CD4-positive, alpha-beta memory T cell (primary cell): ENCODE measurements at regions of chrX and their contacts with region 1.

Region 1: GRCh38 chrX:63720293-63720692 is 64.7 kb downstream of the ARHGEF9 start:
- DNase-seq: no peak
- H3K4me3 ChIP-seq: no peak overlapping the region
- H3K4me3 Mint-ChIP-seq: no peak overlapping the region
- H3K27ac ChIP-seq: no peak overlapping the region
- H3K27ac Mint-ChIP-seq: no peak overlapping the region
- H3K4me1 ChIP-seq: no peaks in the 10 kb centered on the region
- H3K4me1 Mint-ChIP-seq: peaks cover 0 to 2% (median under 1%) of the 10 kb centered on the region in 4 donors
- H3K27me3 ChIP-seq: no peaks in the 10 kb centered on the region
- H3K27me3 Mint-ChIP-seq: no peaks in the 10 kb centered on the region

Region 2: GRCh38 chrX:63686878-63687714 is 33.2 kb before region 1 on chrX:
- CTCF ChIA-PET with region 1: no interaction called
- POLR2A ChIA-PET with region 1: no interaction called
- intact Hi-C with region 1: no loop called
- DNase-seq: peak in 4 of 5 donors; percentile 14 to 37 (median 26)
- H3K4me3 ChIP-seq: no peak overlapping the region
- H3K4me3 Mint-ChIP-seq: no peak overlapping the region
- H3K27ac ChIP-seq: no peak overlapping the region
- H3K27ac Mint-ChIP-seq: peak overlapping the region in 2 of 7 donors; percentile 23 to 49
- H3K4me1 ChIP-seq: no peaks in the 10 kb centered on the region
- H3K4me1 Mint-ChIP-seq: peaks cover 0 to 5% (median 2%) of the 10 kb centered on the region in 4 donors
- H3K27me3 ChIP-seq: no peaks in the 10 kb centered on the region
- H3K27me3 Mint-ChIP-seq: no peaks in the 10 kb centered on the region

Region 3: GRCh38 chrX:63761639-63762038 is 41.3 kb after region 1 on chrX:
- CTCF ChIA-PET with region 1: no interaction called
- POLR2A ChIA-PET with region 1: no interaction called
- intact Hi-C with region 1: loop called (anchors 5 kb)
- DNase-seq: peak in 3 of 5 donors; percentile 10 to 17 (median 16)
- H3K4me3 ChIP-seq: no peak overlapping the region
- H3K4me3 Mint-ChIP-seq: no peak overlapping the region
- H3K27ac ChIP-seq: no peak overlapping the region
- H3K27ac Mint-ChIP-seq: peak overlapping the region in 1 of 7 donors; percentile 53
- H3K4me1 ChIP-seq: no peaks in the 10 kb centered on the region
- H3K4me1 Mint-ChIP-seq: no peaks in the 10 kb centered on the region
- H3K27me3 ChIP-seq: no peaks in the 10 kb centered on the region
- H3K27me3 Mint-ChIP-seq: peaks cover 0 to 1% of the 10 kb centered on the region in 2 donors

Region 4: GRCh38 chrX:63959975-63960374 is 239.7 kb after region 1 on chrX:
- CTCF ChIA-PET with region 1: no interaction called
- POLR2A ChIA-PET with region 1: no interaction called
- intact Hi-C with region 1: no loop called
- DNase-seq: no peak
- H3K4me3 ChIP-seq: no peak overlapping the region
- H3K4me3 Mint-ChIP-seq: no peak overlapping the region
- H3K27ac ChIP-seq: no peak overlapping the region
- H3K27ac Mint-ChIP-seq: no peak overlapping the region
- H3K4me1 ChIP-seq: no peaks in the 10 kb centered on the region
- H3K4me1 Mint-ChIP-seq: no peaks in the 10 kb centered on the region
- H3K27me3 ChIP-seq: no peaks in the 10 kb centered on the region
- H3K27me3 Mint-ChIP-seq: no peaks in the 10 kb centered on the region